T-cell (primary cell): ENCODE measurements at regions of chr22 and their contacts with region 1.

Region 1: GRCh38 chr22:38479096-38479837 is 11.4 kb downstream of the KDELR3 start:
- DNase-seq: no peak
- ATAC-seq: no peak
- H3K4me3 ChIP-seq: no peak overlapping the region
- H3K4me3 Mint-ChIP-seq: no peak overlapping the region
- H3K27ac ChIP-seq: no peak overlapping the region
- H3K27ac Mint-ChIP-seq: peak overlapping the region in 1 of 2 donors; percentile 52
- H3K4me1 ChIP-seq: no peaks in the 10 kb centered on the region
- H3K4me1 Mint-ChIP-seq: peaks cover 6 to 11% (median 10%) of the 10 kb centered on the region in 3 donors
- H3K27me3 ChIP-seq: no peaks in the 10 kb centered on the region
- H3K27me3 Mint-ChIP-seq: no peaks in the 10 kb centered on the region

Region 2: GRCh38 chr22:37862570-37863325 is 616.5 kb before region 1 on chr22:
- CTCF ChIA-PET with region 1: no interaction called
- POLR2A ChIA-PET with region 1: no interaction called
- DNase-seq: no peak
- ATAC-seq: no peak
- H3K4me3 ChIP-seq: no peak overlapping the region
- H3K4me3 Mint-ChIP-seq: no peak overlapping the region
- H3K27ac ChIP-seq: no peak overlapping the region
- H3K27ac Mint-ChIP-seq: no peak overlapping the region
- H3K4me1 ChIP-seq: no peaks in the 10 kb centered on the region
- H3K4me1 Mint-ChIP-seq: peaks cover 3 to 14% (median 9%) of the 10 kb centered on the region in 3 donors
- H3K27me3 ChIP-seq: no peaks in the 10 kb centered on the region
- H3K27me3 Mint-ChIP-seq: no peaks in the 10 kb centered on the region

Region 3: DNA sequence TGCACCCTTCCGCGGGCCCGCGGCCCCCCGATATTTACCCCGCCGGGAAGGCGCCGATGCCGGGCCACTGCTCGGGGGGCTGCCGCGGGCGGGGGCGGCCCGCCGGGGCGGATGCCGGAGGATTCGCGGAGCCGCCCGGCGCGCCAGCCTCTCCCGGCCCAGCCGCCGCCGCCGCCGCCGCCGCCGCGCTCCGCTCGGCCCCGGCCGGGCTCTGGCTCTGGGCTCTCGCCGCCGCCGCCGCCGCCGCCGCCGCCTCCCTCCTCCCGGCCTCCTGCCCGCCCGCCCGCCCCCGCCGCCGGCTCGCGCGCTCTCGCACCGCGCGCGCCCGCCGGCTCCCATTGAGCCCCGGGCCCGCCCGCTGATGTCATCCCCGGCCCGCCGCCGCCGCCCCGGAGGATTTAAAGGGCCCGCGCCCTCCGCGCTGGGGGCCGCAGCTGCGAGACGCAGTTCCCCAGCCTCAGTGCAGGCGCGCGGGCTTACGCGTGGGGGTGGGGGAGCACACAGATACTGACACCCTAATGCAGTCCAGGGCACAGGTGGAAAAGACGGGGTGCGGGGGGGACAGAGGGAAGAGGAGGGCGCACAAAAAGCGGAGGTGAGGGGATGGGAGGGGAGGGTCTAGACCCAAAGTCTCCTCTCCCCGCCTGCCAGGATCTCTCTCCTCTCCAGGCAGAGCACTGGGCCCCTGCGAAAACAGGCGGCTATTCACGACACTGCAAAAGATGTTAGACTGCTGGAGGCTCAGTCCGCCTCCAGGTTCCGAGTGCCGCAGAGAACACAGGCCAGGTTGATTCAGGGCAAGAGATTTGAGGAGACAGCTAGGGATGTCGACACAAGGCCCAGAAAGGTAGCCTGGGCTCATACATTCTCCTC is 161.9 kb before region 1 on chr22 and contains the start of gene CSNK1E:
- CTCF ChIA-PET with region 1: no interaction called
- POLR2A ChIA-PET with region 1: no interaction called
- DNase-seq: peak; percentile 47 to 85 (median 68)
- ATAC-seq: peak; percentile 59 to 68 (median 66)
- H3K4me3 ChIP-seq: peak within 1 kb of the TSS; percentile 58 to 60
- H3K4me3 Mint-ChIP-seq: peak within 1 kb of the TSS; percentile 81 to 86 (median 82)
- H3K27ac ChIP-seq: peak within 1 kb of the TSS; percentile 92
- H3K27ac Mint-ChIP-seq: peak within 1 kb of the TSS; percentile 95 to 96
- H3K4me1 ChIP-seq: peaks cover 2 to 53% of the 10 kb centered on the region in 2 experiments
- H3K4me1 Mint-ChIP-seq: peaks cover 40 to 42% (median 41%) of the 10 kb centered on the region in 3 donors
- H3K27me3 ChIP-seq: no peaks in the 10 kb centered on the region
- H3K27me3 Mint-ChIP-seq: no peaks in the 10 kb centered on the region
- total RNA-seq, gene CSNK1E: 105 to 142 (median 115) TPM

Region 4: GRCh38 chr22:38505541-38506117 is 26.4 kb after region 1 on chr22:
- CTCF ChIA-PET with region 1: no interaction called
- POLR2A ChIA-PET with region 1: interaction called, 4 to 11 read pairs
- DNase-seq: peak in 26 of 35 experiments; percentile 10 to 65 (median 49)
- ATAC-seq: peak; percentile 32 to 38 (median 36)
- H3K4me3 ChIP-seq: peak overlapping the region; percentile 77 to 83
- H3K4me3 Mint-ChIP-seq: peak overlapping the region; percentile 91 to 99 (median 99)
- H3K27ac ChIP-seq: peak overlapping the region; percentile 100
- H3K27ac Mint-ChIP-seq: peak overlapping the region; percentile 100
- H3K4me1 ChIP-seq: peaks cover 20 to 24% of the 10 kb centered on the region in 2 experiments
- H3K4me1 Mint-ChIP-seq: peaks cover 53 to 70% (median 63%) of the 10 kb centered on the region in 3 donors
- H3K27me3 ChIP-seq: no peaks in the 10 kb centered on the region
- H3K27me3 Mint-ChIP-seq: peaks cover 0 to 2% of the 10 kb centered on the region in 2 donors

Region 5: GRCh38 chr22:40196628-40197360 is 1717.5 kb after region 1 on chr22:
- CTCF ChIA-PET with region 1: no interaction called
- POLR2A ChIA-PET with region 1: no interaction called
- DNase-seq: no peak
- ATAC-seq: peak in 2 of 4 experiments; percentile 19 to 47
- H3K4me3 ChIP-seq: no peak overlapping the region
- H3K4me3 Mint-ChIP-seq: no peak overlapping the region
- H3K27ac ChIP-seq: no peak overlapping the region
- H3K27ac Mint-ChIP-seq: peak overlapping the region; percentile 77 to 85
- H3K4me1 ChIP-seq: peaks cover 30 to 50% of the 10 kb centered on the region in 2 experiments
- H3K4me1 Mint-ChIP-seq: peaks cover 87 to 90% (median 88%) of the 10 kb centered on the region in 3 donors
- H3K27me3 ChIP-seq: no peaks in the 10 kb centered on the region
- H3K27me3 Mint-ChIP-seq: no peaks in the 10 kb centered on the region